Activated CD4-positive, alpha-beta T cell treated with anti-CD3 and anti-CD28 coated beads, Interleukin-2, amount 10 ng/mL, durations not matched to agents 24 days and 14 days (primary cell): ENCODE measurements at regions of chr1 and their contacts with region 1.

Region 1: GRCh38 chr1:161726596-161727457 is 5.5 kb downstream of the FCRLB start:
- DNase-seq: peak; percentile 91
- H3K4me3 Mint-ChIP-seq: peak overlapping the region; percentile 88
- H3K27ac Mint-ChIP-seq: peak overlapping the region; percentile 8
- H3K4me1 Mint-ChIP-seq: peaks cover 45% of the 10 kb centered on the region
- H3K27me3 Mint-ChIP-seq: peaks cover 67% of the 10 kb centered on the region

Region 2: DNA sequence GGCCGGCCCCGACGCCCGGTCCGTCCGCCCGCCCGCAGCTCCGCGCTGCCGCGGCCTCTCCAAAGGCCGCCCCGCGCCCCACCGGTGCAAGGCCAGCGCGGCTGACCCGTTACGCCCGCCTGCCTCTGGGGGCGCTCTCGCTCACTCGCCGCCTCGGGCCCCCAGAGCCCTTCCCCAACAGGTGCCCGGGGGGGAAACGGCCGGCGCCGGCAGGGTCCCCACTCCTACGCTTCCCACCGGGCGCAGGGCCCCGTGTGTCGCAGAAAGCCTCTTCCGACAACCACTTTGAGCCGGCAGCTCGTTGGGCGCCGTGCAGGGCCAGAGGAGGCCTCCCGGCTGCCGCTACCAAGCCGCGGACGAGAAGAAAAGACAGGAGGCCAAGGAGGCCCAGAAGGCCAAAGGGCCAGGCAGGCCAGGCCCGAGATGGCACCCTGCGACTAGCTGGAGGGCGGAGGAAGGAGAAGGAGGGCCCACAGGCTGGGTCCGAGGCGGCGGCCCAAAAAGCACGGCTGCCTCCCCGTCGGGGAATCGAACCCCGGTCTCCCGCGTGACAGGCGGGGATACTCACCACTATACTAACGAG is 286.4 kb before region 1 on chr1:
- intact Hi-C with region 1: no loop called
- DNase-seq: peak; percentile 93
- H3K4me3 Mint-ChIP-seq: peak overlapping the region; percentile 91
- H3K27ac Mint-ChIP-seq: peak overlapping the region; percentile 95
- H3K4me1 Mint-ChIP-seq: peaks cover 13% of the 10 kb centered on the region
- H3K27me3 Mint-ChIP-seq: peaks cover 22% of the 10 kb centered on the region

Region 3: GRCh38 chr1:161531986-161532643 is 194.7 kb before region 1 on chr1:
- intact Hi-C with region 1: no loop called
- DNase-seq: peak; percentile 35
- H3K4me3 Mint-ChIP-seq: peak overlapping the region; percentile 20
- H3K27ac Mint-ChIP-seq: peak overlapping the region; percentile 43
- H3K4me1 Mint-ChIP-seq: peaks cover 16% of the 10 kb centered on the region
- H3K27me3 Mint-ChIP-seq: peaks cover 16% of the 10 kb centered on the region

Region 4: DNA sequence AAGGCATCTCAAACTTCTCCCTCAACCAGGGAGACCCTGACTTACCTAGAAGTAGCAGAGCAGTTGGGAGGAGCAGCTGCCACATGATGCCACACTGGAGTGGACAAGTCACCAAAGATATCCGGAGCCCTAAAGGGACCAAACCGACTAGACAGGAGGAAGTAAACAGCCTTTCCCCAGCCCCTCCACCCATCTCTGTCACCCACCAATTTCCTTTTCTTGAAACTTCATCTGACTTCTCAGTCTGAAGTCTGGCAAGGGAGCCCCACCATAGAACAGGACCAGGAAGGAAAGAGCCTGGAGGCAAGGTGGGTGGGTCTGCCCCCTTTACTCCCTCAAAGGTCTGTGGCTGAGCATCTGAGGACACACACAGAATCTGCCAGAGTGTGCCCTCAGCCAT is 177.2 kb before region 1 on chr1 and contains the start of gene FCGR3A:
- intact Hi-C with region 1: loop called (anchors 5 kb)
- DNase-seq: no peak
- H3K4me3 Mint-ChIP-seq: no peak within 1 kb of the TSS
- H3K27ac Mint-ChIP-seq: no peak within 1 kb of the TSS
- H3K4me1 Mint-ChIP-seq: peaks cover 5% of the 10 kb centered on the region
- H3K27me3 Mint-ChIP-seq: no peaks in the 10 kb centered on the region
- total RNA-seq, gene FCGR3A: not detected in 2 replicates

Region 5: DNA sequence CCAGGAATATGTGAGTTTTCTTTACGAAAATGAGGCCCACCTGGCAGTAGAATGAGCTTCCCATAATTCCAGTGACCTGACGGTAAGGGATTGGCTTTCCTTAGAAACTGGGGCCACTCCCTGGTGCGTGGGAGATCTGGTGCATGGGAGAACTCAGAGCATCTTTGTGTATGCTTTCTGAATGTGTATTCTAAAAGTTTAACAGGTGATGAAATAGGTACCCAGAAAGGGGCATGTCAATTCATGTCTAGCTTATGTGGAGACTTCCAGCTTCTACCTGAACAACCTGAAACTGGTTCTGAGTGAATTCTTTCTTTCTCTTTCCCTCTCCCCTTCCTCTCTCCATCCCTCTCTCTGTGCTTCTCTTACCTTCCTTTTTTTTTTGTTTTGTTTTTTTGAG is 35.0 kb before region 1 on chr1:
- intact Hi-C with region 1: no loop called
- DNase-seq: no peak
- H3K4me3 Mint-ChIP-seq: no peak overlapping the region
- H3K27ac Mint-ChIP-seq: no peak overlapping the region
- H3K4me1 Mint-ChIP-seq: no peaks in the 10 kb centered on the region
- H3K27me3 Mint-ChIP-seq: peaks cover 45% of the 10 kb centered on the region

Region 6: DNA sequence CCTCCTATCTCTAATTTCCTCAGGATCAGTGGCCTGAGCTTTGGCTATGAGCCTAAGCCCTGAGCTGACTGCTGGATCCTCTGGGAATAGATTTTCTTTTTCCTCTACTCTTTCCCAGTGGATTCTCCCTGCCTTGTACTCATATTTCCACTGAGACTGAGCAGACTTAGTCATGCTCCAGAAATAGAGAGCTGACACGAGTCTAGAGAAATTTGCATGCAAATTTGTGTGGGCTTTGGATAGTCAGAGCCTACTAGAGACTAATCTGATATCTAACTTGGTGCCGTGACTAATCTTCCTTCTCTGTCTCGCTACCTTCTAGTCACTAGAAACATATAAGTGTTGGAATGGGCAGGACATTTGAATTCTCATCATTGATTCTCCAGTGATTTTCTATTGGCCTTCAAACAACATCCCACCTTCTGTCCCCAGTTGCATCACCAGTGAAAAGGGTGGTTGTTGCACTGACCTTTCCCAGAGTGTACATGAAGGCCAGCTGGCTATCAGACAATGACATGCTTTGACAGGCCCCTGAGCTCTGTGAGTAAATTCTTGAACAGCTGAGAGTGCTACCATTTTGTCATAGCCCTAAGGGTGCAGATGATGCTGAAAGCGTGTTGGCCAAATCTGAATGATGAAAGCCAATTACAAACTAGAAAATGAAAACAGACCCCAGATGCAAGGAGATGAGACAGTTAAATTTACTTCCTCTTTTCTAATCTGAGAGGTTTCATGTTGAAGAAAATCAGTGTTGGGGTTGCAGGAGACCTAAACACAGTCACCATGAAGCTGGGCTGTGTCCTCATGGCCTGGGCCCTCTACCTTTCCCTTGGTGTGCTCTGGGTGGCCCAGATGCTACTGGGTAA is 20.1 kb before region 1 on chr1 and contains the start of gene FCRLA:
- intact Hi-C with region 1: loop called (anchors 2 kb)
- DNase-seq: peak; percentile 37
- H3K4me3 Mint-ChIP-seq: no peak within 1 kb of the TSS
- H3K27ac Mint-ChIP-seq: no peak within 1 kb of the TSS
- H3K4me1 Mint-ChIP-seq: no peaks in the 10 kb centered on the region
- H3K27me3 Mint-ChIP-seq: peaks cover 25% of the 10 kb centered on the region
- total RNA-seq, gene FCRLA: not detected in 2 replicates

Region 7: GRCh38 chr1:161749509-161750407 is 22.9 kb after region 1 on chr1 and contains the start of gene DUSP12:
- intact Hi-C with region 1: loop called (anchors 1 kb)
- DNase-seq: peak; percentile 95
- H3K4me3 Mint-ChIP-seq: peak within 1 kb of the TSS; percentile 99
- H3K27ac Mint-ChIP-seq: peak within 1 kb of the TSS; percentile 100
- H3K4me1 Mint-ChIP-seq: peaks cover 31% of the 10 kb centered on the region
- H3K27me3 Mint-ChIP-seq: peaks cover 17% of the 10 kb centered on the region
- total RNA-seq, gene DUSP12: 38.2 and 39.7 TPM in 2 replicates